Posterior vena cava (tissue), 2 donors: ENCODE measurements at regions of chr9 and their contacts with region 1.

Region 1: DNA sequence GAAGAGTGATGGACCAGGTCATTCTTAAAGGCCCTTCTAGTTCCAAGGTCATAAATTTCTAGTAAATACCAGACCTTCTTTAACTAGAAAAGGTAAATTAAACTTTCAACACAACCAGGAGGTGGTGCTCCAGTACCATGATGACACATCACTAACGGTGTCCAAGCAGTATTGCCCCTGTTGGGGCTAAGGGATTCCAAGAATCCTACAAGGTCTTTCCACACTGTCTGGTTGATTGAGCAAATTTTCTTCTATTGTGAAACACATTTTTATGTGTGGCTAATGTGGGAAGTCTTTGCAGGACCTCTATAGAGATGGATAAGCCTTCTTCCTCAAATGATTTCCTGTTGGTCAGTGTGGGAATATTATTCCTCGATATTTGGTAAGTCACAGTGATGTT is 459.6 kb upstream of the PAPPA start:
- DNase-seq: no peak

Region 2: GRCh38 chr9:116572095-116572748 is 878.2 kb after region 1 on chr9:
- intact Hi-C with region 1: loop called in 1 of 2 experiments (anchors 10 kb)
- DNase-seq: peak; percentile 96